Natural killer cell (primary cell): ENCODE measurements at regions of chr2 and their contacts with region 1.

Region 1: DNA sequence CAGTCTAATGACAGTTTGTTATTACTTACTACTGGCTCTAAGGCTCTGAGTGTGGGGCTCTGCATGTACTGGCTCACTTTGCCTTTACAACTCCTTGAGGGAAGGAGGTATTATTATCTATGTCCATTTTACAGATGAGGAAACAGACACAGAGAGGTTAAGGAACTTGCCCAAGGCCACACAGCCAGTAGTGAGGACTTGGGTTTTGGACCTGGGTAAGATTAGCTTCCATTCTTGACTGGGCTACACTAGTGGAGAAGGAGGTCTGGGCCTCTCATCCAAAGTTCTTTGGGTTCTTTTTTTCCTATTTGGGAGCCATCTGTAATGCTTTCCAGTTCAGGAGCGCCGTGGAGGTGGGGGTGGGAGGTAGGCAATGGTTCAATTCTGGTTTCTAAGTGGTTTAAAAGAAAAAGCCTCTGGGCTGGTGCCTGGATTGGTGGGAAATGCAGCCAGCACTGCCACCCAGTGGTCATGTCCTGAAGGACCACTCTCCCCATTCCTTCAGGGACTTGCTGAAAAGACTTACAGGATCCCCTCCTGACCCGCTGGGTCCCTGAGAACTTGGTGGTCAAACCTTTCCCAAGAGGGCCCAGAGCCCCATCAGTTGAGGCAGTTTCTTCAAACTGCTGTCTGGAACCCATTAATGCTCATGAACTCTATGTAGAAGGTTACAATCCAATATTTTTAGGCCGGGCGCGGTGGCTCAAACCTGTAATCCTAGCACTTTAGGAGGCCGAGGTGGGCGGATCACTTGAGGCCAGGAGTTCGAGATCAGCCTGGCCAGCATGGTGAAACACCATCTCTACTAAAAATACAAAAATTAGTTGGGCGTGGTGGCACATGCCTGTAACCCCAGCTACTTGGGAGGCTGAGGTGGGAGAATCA is 38.6 kb upstream of the NOTO start:
- DNase-seq: peak; percentile 51 to 80
- ATAC-seq: peak; percentile 70 to 92 (median 87)
- H3K4me3 ChIP-seq: no peak overlapping the region
- H3K4me3 Mint-ChIP-seq: no peak overlapping the region
- H3K27ac ChIP-seq: no peak overlapping the region
- H3K27ac Mint-ChIP-seq: no peak overlapping the region
- H3K4me1 ChIP-seq: no peaks in the 10 kb centered on the region
- H3K4me1 Mint-ChIP-seq: no peaks in the 10 kb centered on the region
- H3K27me3 ChIP-seq: no peaks in the 10 kb centered on the region
- H3K27me3 Mint-ChIP-seq: peaks cover 15 to 22% of the 10 kb centered on the region in 2 donors
- CTCF ChIP-seq: peak; percentile 81

Region 2: GRCh38 chr2:72892506-72893173 is 271.1 kb before region 1 on chr2:
- intact Hi-C with region 1: loop called (anchors 1 kb)
- DNase-seq: peak; percentile 42 to 76
- ATAC-seq: peak; percentile 67 to 95 (median 90)
- H3K4me3 ChIP-seq: no peak overlapping the region
- H3K4me3 Mint-ChIP-seq: no peak overlapping the region
- H3K27ac ChIP-seq: no peak overlapping the region
- H3K27ac Mint-ChIP-seq: no peak overlapping the region
- H3K4me1 ChIP-seq: peaks cover 9% of the 10 kb centered on the region
- H3K4me1 Mint-ChIP-seq: peaks cover 0 to 9% of the 10 kb centered on the region in 2 donors
- H3K27me3 ChIP-seq: peaks cover 3% of the 10 kb centered on the region
- H3K27me3 Mint-ChIP-seq: peaks cover 23 to 37% of the 10 kb centered on the region in 2 donors
- CTCF ChIP-seq: peak; percentile 63

Region 3: DNA sequence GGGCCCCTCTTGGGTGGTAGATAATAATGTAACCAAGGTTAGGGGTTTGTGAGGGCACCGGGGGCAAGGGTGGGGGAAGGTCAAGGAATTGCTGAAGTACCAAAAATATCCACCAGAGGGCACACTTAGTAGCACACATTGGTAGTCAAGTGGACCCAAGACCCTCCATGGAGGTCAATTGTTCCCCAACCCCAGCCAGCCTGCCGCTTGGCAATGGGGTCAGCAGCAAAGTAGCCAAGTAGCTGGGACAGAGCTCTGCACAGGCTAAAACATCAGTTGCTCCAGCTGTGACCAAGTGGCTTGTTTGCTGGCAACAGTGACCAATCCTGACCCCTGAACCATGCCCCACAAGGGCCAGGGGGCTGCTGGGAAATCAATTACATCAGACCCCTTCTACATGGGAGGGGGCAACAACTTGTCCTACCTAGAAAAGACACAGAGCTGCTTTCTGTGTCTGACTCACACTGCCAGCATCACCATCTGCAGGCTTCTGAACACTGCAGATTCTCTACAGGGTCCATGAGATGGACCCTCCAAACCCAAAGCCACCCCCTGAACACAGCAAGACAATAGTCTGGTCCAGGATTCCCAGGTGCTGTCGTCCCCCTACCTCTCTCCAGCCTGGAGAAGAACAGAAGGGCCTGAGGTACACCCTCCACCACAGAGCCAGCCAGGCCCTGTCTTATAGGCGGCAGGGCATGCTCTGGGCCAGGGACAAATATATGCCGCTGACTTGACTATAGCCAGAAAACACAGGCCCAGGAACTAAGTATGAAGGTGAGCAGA is 170.4 kb before region 1 on chr2:
- intact Hi-C with region 1: loop called (anchors 1 kb)
- DNase-seq: peak; percentile 43 to 79
- ATAC-seq: peak; percentile 67 to 74 (median 68)
- H3K4me3 ChIP-seq: no peak overlapping the region
- H3K4me3 Mint-ChIP-seq: no peak overlapping the region
- H3K27ac ChIP-seq: no peak overlapping the region
- H3K27ac Mint-ChIP-seq: no peak overlapping the region
- H3K4me1 ChIP-seq: no peaks in the 10 kb centered on the region
- H3K4me1 Mint-ChIP-seq: no peaks in the 10 kb centered on the region
- H3K27me3 ChIP-seq: no peaks in the 10 kb centered on the region
- H3K27me3 Mint-ChIP-seq: no peaks in the 10 kb centered on the region
- CTCF ChIP-seq: peak; percentile 84

Region 4: DNA sequence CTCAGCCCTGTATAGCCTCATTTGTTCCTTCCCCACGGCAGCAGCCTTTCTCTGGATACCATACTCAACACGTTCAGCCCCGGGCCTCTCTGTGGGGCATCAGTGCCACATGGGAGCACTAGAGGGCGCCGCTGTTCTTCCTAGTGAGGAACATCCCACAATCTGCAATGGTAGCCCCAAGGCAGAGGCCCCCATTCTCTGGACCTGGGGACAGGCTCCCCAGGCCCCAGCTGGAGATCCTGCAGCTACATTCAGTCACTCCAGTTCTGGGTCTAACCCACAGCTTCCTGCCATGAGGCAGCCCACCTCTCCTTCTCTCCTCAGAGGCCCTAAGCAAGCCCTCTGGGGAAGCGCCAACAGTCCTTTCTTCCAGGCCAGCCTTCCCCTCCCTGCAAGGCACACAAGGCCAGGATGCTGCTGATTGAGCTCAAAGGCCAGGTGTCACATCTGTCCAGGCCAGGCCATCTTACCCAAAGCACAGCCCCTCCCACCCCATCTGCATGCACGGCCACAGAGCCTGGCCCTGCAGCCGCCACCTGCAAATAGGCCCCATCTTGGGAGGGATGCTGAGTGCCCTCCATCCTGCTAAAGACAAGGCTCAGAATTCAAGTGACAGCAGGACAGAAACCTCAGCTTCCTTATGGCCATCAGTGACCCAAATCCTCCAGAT is 77.9 kb before region 1 on chr2:
- intact Hi-C with region 1: loop called (anchors 1 kb)
- DNase-seq: peak; percentile 74 to 86
- ATAC-seq: peak; percentile 88 to 100 (median 97)
- H3K4me3 ChIP-seq: no peak overlapping the region
- H3K4me3 Mint-ChIP-seq: no peak overlapping the region
- H3K27ac ChIP-seq: no peak overlapping the region
- H3K27ac Mint-ChIP-seq: no peak overlapping the region
- H3K4me1 ChIP-seq: no peaks in the 10 kb centered on the region
- H3K4me1 Mint-ChIP-seq: peaks cover 0 to 6% of the 10 kb centered on the region in 2 donors
- H3K27me3 ChIP-seq: no peaks in the 10 kb centered on the region
- H3K27me3 Mint-ChIP-seq: peaks cover 0 to 2% of the 10 kb centered on the region in 2 donors
- CTCF ChIP-seq: peak; percentile 83

Region 5: GRCh38 chr2:73268830-73269685 is 105.3 kb after region 1 on chr2:
- intact Hi-C with region 1: no loop called
- DNase-seq: peak; percentile 53 to 91
- ATAC-seq: peak; percentile 78 to 92 (median 92)
- H3K4me3 ChIP-seq: no peak overlapping the region
- H3K4me3 Mint-ChIP-seq: peak overlapping the region; percentile 4
- H3K27ac ChIP-seq: no peak overlapping the region
- H3K27ac Mint-ChIP-seq: peak overlapping the region in 1 of 2 donors; percentile 36
- H3K4me1 ChIP-seq: peaks cover 8% of the 10 kb centered on the region
- H3K4me1 Mint-ChIP-seq: peaks cover 10 to 18% of the 10 kb centered on the region in 2 donors
- H3K27me3 ChIP-seq: no peaks in the 10 kb centered on the region
- H3K27me3 Mint-ChIP-seq: no peaks in the 10 kb centered on the region
- CTCF ChIP-seq: no peak

Region 6: GRCh38 chr2:73324126-73324725 is 160.5 kb after region 1 on chr2:
- intact Hi-C with region 1: no loop called
- DNase-seq: no peak
- ATAC-seq: no peak
- H3K4me3 ChIP-seq: no peak overlapping the region
- H3K4me3 Mint-ChIP-seq: no peak overlapping the region
- H3K27ac ChIP-seq: no peak overlapping the region
- H3K27ac Mint-ChIP-seq: no peak overlapping the region
- H3K4me1 ChIP-seq: no peaks in the 10 kb centered on the region
- H3K4me1 Mint-ChIP-seq: no peaks in the 10 kb centered on the region
- H3K27me3 ChIP-seq: peaks cover 5% of the 10 kb centered on the region
- H3K27me3 Mint-ChIP-seq: peaks cover 21 to 74% of the 10 kb centered on the region in 2 donors
- CTCF ChIP-seq: no peak